ENCODE measurements at regions of chr5 and their contacts with region 1.

Region 1: DNA sequence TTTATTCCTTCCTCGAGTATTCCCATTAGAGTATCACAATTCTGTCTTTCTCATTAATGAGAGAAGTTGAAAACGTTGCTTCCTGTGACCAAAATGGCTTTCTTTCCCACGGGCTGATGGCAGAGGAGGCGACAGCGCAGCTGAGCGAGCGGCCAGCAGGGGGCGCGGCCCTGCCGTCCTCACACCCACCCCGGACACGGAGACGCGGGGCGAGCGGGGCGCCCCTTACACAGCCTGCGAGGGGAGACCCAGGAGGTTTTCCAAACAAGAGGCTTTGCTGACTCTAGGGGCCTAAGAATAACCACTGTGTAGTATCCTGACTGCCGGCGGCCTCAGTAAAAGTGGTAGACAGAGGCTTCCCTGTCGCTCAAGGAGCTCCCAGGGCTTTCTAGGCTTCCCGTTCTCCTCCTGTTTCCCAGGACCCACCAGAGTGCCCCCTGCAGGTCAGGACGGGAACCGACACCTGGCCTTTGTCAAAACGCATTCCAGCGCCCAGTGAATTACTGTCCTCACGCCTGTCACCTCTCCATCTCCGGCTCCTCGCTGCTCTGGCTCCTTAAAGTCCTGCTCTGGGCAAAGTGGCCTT is 27.3 kb upstream of the FGF1 start:
- DNase-seq: peak; percentile 81
- ATAC-seq: peak; percentile 94
- H3K4me3 ChIP-seq: peak overlapping the region; percentile 57 to 77 (median 69); a peak in 5 of 6 replicates
- H3K27ac ChIP-seq: no peak overlapping the region
- H3K4me1 ChIP-seq: peaks cover 18% of the 10 kb centered on the region
- H3K27me3 ChIP-seq: peaks cover 1 to 14% of the 10 kb centered on the region in 2 experiments; a peak in 4 of 5 replicates
- CTCF ChIP-seq: peak; percentile 89
- EP300 ChIP-seq: no peak
- POLR2A ChIP-seq: no peak
- RAD21 ChIP-seq: peak; percentile 71

Region 2: DNA sequence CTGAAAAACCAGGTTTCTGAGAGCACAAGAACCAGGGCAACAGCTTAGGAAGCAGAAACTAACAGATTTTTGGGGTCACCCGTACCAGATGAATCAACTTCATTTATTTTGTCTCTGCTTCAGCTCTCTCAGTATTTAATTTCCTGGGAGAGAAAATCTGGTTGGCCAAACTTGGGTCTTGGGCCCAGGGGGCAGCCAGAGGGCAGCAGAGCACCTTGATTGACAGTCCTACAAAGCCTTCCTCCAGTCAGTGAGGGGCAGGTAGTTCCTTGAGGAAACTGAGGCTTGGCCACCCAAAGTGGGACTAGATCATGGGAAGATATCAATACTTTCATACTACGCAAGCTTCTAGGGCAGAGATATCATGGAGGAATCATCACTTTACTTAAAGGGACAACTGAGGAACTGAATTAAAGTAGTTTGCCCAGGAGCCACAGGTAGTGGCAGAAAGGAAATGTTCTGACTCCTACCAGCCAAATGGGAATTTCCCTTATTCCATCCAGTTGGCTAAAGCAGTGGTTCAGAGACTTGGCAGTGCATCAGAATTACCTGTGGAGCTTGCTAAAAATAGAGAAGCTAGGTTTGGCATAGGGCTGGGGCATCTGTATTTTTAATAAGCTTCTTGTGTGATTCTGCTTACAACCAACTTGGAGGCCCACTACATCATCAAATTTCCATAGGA is 35.5 kb after region 1 on chr5:
- CTCF ChIA-PET with region 1: no interaction called
- POLR2A ChIA-PET with region 1: no interaction called
- in situ Hi-C with region 1: no loop called
- intact Hi-C with region 1: loop called (anchors 1 kb)
- DNase-seq: peak; percentile 42
- ATAC-seq: peak; percentile 80
- H3K4me3 ChIP-seq: no peak overlapping the region
- H3K27ac ChIP-seq: no peak overlapping the region
- H3K4me1 ChIP-seq: peaks cover 36% of the 10 kb centered on the region
- H3K27me3 ChIP-seq: peaks cover 0 to under 1% of the 10 kb centered on the region in 2 experiments; a peak in 2 of 5 replicates
- CTCF ChIP-seq: peak; percentile 89
- EP300 ChIP-seq: no peak
- POLR2A ChIP-seq: no peak
- RAD21 ChIP-seq: peak; percentile 91

Region 3: DNA sequence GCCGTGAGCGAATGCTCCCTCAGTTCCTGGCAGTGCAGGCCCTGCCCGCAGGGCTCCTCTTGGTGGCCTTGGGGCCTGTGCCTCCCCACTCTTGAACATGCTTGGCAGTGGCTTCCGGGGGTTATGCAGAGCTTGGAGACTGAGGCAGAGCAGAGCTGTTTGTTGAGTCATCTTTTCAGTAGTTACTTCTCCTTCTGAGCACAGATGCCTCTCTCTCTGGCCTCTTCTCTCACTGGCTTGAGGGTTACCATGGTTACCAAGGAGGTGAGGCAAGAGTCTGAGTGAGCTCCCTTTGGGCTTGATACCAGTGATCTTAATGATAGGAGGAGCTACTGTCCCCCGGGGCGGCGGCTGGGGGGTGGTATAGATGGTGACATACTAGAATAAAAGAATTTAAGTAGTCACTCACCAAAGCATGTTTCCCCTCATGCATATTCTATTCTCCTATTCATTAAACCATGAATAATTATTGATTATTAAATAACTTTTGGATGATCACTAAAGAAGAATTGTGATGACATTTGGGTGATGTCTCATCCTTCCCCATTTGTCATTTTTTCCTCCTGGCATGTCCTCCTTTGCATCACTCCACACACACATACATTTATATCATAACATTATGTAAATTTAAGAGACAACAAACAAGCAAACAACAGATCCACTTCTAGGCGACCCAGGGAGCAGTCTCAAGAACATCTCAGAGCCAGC is 168.0 kb after region 1 on chr5:
- CTCF ChIA-PET with region 1: interaction called, 74 read pairs
- POLR2A ChIA-PET with region 1: no interaction called
- in situ Hi-C with region 1: no loop called
- intact Hi-C with region 1: loop called (anchors 1 kb)
- DNase-seq: no peak
- ATAC-seq: no peak
- H3K4me3 ChIP-seq: no peak overlapping the region
- H3K27ac ChIP-seq: no peak overlapping the region
- H3K4me1 ChIP-seq: 0 out of 2 replicates have a peak, but pooled peaks cover 7% of the 10 kb centered on the region
- H3K27me3 ChIP-seq: no peaks in the 10 kb centered on the region
- CTCF ChIP-seq: no peak
- EP300 ChIP-seq: no peak
- POLR2A ChIP-seq: no peak
- RAD21 ChIP-seq: no peak

Region 4: GRCh38 chr5:142888469-142889085 is 175.4 kb after region 1 on chr5:
- CTCF ChIA-PET with region 1: interaction called, 74 read pairs
- POLR2A ChIA-PET with region 1: no interaction called
- in situ Hi-C with region 1: no loop called
- intact Hi-C with region 1: loop called (anchors 1 kb)
- DNase-seq: peak; percentile 61
- ATAC-seq: peak; percentile 80
- H3K4me3 ChIP-seq: no peak overlapping the region
- H3K27ac ChIP-seq: no peak overlapping the region
- H3K4me1 ChIP-seq: 0 out of 2 replicates have a peak, but pooled peaks cover 7% of the 10 kb centered on the region
- H3K27me3 ChIP-seq: no peaks in the 10 kb centered on the region
- CTCF ChIP-seq: peak; percentile 78
- EP300 ChIP-seq: no peak
- POLR2A ChIP-seq: no peak
- RAD21 ChIP-seq: peak; percentile 54; the same call in 1 of the 2 replicates

Region 5: DNA sequence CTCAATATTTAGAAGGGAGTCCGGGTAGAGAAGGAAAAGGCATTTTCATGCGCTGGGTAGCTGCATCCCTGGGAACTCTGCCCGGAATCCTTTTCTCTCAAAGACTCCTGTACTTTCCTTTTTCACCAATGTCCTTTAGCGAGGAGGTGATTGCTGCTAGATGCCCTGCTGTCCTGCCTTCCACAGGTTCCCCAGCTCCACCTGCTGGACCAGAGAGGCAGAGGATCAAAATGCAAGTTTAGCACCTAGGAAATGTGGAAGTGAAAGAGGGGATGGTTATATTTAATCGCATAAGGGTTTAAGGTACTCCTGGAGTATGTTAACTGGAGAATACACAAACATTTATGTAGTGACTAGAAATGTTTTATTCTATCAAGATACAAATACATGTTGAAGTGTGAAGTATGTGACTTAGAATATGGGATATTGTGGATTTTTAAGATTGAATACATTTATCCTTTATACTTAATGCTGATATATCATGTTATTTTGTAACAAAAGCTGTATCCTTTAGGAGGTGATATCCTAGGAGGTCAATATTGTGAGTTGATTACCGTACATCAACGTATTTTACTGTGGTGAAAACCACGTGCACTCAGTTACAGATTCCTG is 202.7 kb after region 1 on chr5:
- CTCF ChIA-PET with region 1: interaction called, 9 read pairs
- POLR2A ChIA-PET with region 1: no interaction called
- in situ Hi-C with region 1: no loop called
- intact Hi-C with region 1: loop called (anchors 1 kb)
- DNase-seq: peak; percentile 50
- ATAC-seq: peak; percentile 90
- H3K4me3 ChIP-seq: no peak overlapping the region
- H3K27ac ChIP-seq: no peak overlapping the region
- H3K4me1 ChIP-seq: peaks cover 26% of the 10 kb centered on the region
- H3K27me3 ChIP-seq: no peaks in the 10 kb centered on the region
- CTCF ChIP-seq: peak; percentile 81
- EP300 ChIP-seq: no peak
- POLR2A ChIP-seq: no peak
- RAD21 ChIP-seq: 0 out of 2 replicates have a peak, but pooled peaks have one; percentile 42

Measured in HepG2 (cell line).